H1 (cell line): ENCODE measurements at regions of chr3 and their contacts with region 1.

Region 1: DNA sequence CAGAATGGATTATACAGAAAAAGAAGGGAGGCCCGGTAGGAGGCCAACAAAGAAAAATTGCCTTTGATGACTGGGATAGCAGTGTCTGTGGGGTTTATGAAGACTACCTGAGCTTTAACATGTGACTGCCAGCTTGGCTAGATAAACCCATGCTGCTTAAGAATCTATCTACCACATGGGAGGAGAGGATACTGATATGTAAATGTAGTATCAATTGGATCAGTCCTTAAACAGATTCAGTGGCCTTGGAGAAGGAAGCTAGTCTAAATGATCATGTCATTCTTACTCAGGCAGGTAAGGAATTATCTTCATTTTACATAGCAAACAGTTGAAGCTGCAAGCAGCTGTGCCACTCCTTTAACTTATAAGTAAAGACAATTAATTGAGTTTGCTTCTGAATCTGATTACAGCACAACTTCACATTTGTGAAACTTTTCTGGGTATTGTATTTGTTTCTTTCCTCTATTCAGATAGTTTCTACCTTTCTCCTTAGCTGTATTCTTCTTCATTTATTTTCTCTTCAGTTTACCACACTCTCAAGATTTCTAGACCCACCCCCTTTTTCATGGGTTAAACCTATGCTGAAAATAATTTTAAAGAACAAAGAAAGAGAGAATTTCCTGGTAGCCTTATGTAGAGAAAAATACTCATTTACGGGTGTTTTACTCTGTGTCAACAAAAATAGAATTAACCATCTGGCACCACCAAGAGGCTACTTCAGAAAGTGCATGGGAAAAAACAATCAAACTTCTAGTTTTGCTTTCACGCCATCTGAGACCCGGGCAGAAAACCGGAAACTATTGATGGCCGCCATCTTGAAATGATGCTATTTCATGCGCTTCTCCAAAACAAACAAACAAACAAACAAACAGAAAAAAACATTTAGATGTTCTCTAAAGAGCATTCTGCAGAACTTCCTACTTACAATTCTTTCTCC is 49.8 kb upstream of the SYNPR start:
- DNase-seq: no peak
- H3K4me3 ChIP-seq: no peak overlapping the region
- H3K27ac ChIP-seq: no peak overlapping the region
- H3K4me1 ChIP-seq: peaks cover 0 to 7% (median 5%) of the 10 kb centered on the region in 4 experiments; a peak in 5 of 7 replicates
- H3K27me3 ChIP-seq: no peaks in the 10 kb centered on the region
- CTCF ChIP-seq: peak in 2 of 3 experiments; percentile 55 to 64; a peak in 2 of 4 replicates
- EP300 ChIP-seq: no peak
- POLR2A ChIP-seq: no peak
- RAD21 ChIP-seq: peak; percentile 72 to 81

Region 2: GRCh38 chr3:63245548-63246241 is 17.3 kb after region 1 on chr3:
- CTCF ChIA-PET with region 1: interaction called, 45 read pairs
- POLR2A ChIA-PET with region 1: no interaction called
- DNase-seq: no peak
- H3K4me3 ChIP-seq: no peak overlapping the region
- H3K27ac ChIP-seq: no peak overlapping the region
- H3K4me1 ChIP-seq: no peaks in the 10 kb centered on the region
- H3K27me3 ChIP-seq: peaks cover 0 to 1% (median 0%) of the 10 kb centered on the region in 4 experiments; a peak in 1 of 7 replicates
- CTCF ChIP-seq: no peak
- EP300 ChIP-seq: no peak
- POLR2A ChIP-seq: no peak
- RAD21 ChIP-seq: peak; percentile 22 to 33; a peak in 3 of 4 replicates